GM12878 (cell line): ENCODE measurements at regions of chr12 and their contacts with region 1.

Region 1: DNA sequence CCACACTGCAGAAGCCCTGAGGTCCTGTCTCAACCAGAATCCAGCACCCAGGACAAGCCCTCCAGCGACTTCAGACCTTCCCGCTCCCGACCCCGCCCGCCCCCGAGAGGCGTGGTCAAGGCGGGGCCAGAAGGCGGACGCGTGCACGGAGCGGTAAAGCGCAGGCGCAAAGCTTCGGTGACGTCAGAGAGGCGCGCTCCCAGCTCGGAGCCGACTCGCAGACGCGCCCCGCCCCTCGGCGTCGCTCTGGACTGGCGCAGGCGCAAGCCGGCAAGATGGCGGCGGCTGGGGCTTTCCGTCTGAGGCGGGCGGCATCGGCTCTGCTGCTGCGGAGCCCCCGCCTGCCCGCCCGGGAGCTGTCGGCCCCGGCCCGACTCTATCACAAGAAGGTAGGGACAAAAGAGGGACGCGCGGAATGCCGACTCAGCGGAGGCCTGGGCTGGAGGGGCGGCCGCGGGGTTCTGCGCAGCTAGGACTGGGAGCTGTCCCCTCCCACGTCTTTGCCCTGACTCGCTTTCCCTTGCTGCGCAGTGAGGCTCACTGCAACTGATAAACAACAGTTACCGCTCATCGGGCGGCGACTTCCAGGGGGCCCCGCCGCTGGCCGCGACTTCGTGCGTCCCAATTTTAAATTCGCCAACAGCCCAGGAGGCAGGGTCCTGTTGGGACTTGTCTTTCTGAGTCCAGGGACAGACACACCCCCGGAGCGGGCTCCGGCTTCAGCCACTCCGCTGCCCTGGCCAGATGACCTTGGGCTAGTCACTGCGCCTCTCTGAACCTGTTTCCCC is at the start of gene ISCU:
- DNase-seq: peak; percentile 90
- ATAC-seq: peak; percentile 66
- H3K4me3 ChIP-seq: peak within 1 kb of the TSS; percentile 89
- H3K27ac ChIP-seq: peak within 1 kb of the TSS; percentile 100
- H3K4me1 ChIP-seq: peaks cover 42% of the 10 kb centered on the region
- H3K27me3 ChIP-seq: no peaks in the 10 kb centered on the region
- CTCF ChIP-seq: no peak
- EP300 ChIP-seq: no peak
- POLR2A ChIP-seq: peak; percentile 94
- RAD21 ChIP-seq: no peak
- polyA plus RNA-seq, gene ISCU: 32.8 to 66.1 TPM

Region 2: DNA sequence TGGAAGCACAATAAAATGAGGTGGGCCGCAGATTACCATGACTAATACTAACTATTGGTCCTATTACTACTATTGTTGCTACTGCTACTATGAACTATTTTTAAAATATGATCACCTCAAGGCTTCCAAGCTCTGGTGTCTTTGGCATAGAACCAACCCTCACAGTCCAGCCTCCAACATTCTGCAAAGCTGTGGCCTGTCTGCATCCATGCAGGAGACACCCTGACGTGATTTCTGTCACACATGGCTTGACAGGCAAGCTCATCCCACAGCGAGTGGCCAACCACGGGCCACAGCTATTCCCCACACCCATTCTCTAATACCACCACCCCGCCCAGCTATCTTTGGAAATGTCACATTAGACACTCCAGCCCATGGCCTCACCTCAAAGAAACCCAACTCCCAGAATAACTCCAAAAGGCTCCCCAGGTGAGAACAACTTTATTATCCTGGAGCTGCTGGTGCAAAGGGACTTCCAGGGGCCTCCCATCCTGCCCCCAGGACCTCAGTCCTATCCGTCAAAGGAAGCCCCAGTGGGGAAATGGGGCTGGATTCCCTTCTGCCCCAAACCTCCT is 14.2 kb after region 1 on chr12:
- CTCF ChIA-PET with region 1: interaction called, 21 read pairs
- POLR2A ChIA-PET with region 1: interaction called, 13 read pairs
- RAD21 ChIA-PET with region 1: interaction called, 24 read pairs
- SMC1A ChIA-PET with region 1: interaction called, 16 read pairs
- in situ Hi-C with region 1: no loop called
- intact Hi-C with region 1: no loop called
- DNase-seq: no peak
- ATAC-seq: no peak
- H3K4me3 ChIP-seq: no peak overlapping the region
- H3K27ac ChIP-seq: no peak overlapping the region; the same call in 1 of the 2 replicates
- H3K4me1 ChIP-seq: peaks cover 45% of the 10 kb centered on the region
- H3K27me3 ChIP-seq: no peaks in the 10 kb centered on the region
- CTCF ChIP-seq: no peak
- EP300 ChIP-seq: no peak
- POLR2A ChIP-seq: no peak
- RAD21 ChIP-seq: no peak

Region 3: GRCh38 chr12:108633534-108634248 is 71.1 kb after region 1 on chr12 and contains the start of gene SELPLG:
- CTCF ChIA-PET with region 1: interaction called, 244 read pairs
- POLR2A ChIA-PET with region 1: interaction called, 199 read pairs
- RAD21 ChIA-PET with region 1: interaction called, 413 read pairs
- SMC1A ChIA-PET with region 1: interaction called, 397 read pairs
- in situ Hi-C with region 1: no loop called
- intact Hi-C with region 1: no loop called
- DNase-seq: peak; percentile 99
- ATAC-seq: peak; percentile 64
- H3K4me3 ChIP-seq: peak within 1 kb of the TSS; percentile 76
- H3K27ac ChIP-seq: peak within 1 kb of the TSS; percentile 86
- H3K4me1 ChIP-seq: peaks cover 87% of the 10 kb centered on the region
- H3K27me3 ChIP-seq: no peaks in the 10 kb centered on the region
- CTCF ChIP-seq: peak; percentile 32 to 41 (median 36); a peak in 3 of 6 replicates
- EP300 ChIP-seq: peak; percentile 99
- POLR2A ChIP-seq: peak; percentile 77
- RAD21 ChIP-seq: no peak; the same call in 1 of the 2 replicates
- polyA plus RNA-seq, gene SELPLG: 3.2 to 5.3 TPM

Region 4: GRCh38 chr12:108731105-108731865 is 168.7 kb after region 1 on chr12 and contains the start of gene CORO1C:
- CTCF ChIA-PET with region 1: no interaction called
- POLR2A ChIA-PET with region 1: interaction called, 4 read pairs
- RAD21 ChIA-PET with region 1: interaction called, 6 read pairs
- SMC1A ChIA-PET with region 1: no interaction called
- in situ Hi-C with region 1: no loop called
- intact Hi-C with region 1: loop called (anchors 1 kb)
- DNase-seq: peak; percentile 90
- ATAC-seq: peak; percentile 80
- H3K4me3 ChIP-seq: peak within 1 kb of the TSS; percentile 88
- H3K27ac ChIP-seq: peak within 1 kb of the TSS; percentile 79
- H3K4me1 ChIP-seq: peaks cover 13% of the 10 kb centered on the region
- H3K27me3 ChIP-seq: no peaks in the 10 kb centered on the region
- CTCF ChIP-seq: peak; percentile 80 to 88 (median 86)
- EP300 ChIP-seq: no peak; a peak in 1 of 4 replicates
- POLR2A ChIP-seq: peak; percentile 86
- RAD21 ChIP-seq: peak; percentile 58
- polyA plus RNA-seq, gene CORO1C: 52.7 to 52.9 TPM

Region 5: GRCh38 chr12:108856428-108857157 is 294.1 kb after region 1 on chr12:
- CTCF ChIA-PET with region 1: interaction called, 7 read pairs
- POLR2A ChIA-PET with region 1: no interaction called
- RAD21 ChIA-PET with region 1: interaction called, 51 read pairs
- SMC1A ChIA-PET with region 1: interaction called, 48 read pairs
- in situ Hi-C with region 1: loop called (anchors 5 kb)
- intact Hi-C with region 1: loop called (anchors 1 kb)
- DNase-seq: no peak
- ATAC-seq: peak; percentile 37
- H3K4me3 ChIP-seq: peak overlapping the region; percentile 93
- H3K27ac ChIP-seq: peak overlapping the region; percentile 79
- H3K4me1 ChIP-seq: peaks cover 52% of the 10 kb centered on the region
- H3K27me3 ChIP-seq: no peaks in the 10 kb centered on the region
- CTCF ChIP-seq: peak in 1 of 3 experiments; percentile 5; a peak in 1 of 6 replicates
- EP300 ChIP-seq: peak; percentile 64 to 77; a peak in 3 of 4 replicates
- POLR2A ChIP-seq: no peak
- RAD21 ChIP-seq: no peak